CD14-positive monocyte (primary cell): ENCODE measurements at regions of chr1 and their contacts with region 1.

Region 1: DNA sequence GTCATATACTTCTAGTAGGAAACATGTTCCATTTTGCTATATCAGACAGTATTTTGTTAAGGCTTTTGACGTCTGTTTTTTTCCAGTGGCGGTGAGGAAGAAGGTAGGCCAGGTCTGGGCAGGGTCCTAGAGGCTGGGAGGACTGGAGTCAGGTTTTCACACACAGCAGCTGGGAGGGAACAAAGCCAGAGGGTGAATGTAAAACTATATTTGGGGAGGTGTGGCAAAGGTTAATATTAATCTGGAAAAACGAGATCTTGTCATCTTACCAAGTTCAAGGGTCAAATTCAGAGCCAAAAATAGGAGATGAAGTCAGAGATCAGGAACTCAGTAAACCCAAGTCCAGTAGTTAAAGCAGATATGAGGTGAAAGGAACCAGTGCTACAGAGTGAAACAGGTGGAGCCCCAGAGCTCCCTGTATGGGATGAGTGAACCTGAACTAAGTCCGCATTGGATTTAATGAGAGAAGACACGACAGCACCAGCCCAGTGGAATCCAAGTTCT is 10.7 kb upstream of the OTUD7B start:
- DNase-seq: no peak
- H3K4me3 ChIP-seq: no peak overlapping the region
- H3K4me3 Mint-ChIP-seq: peak overlapping the region in 1 of 2 donors; percentile 75
- H3K27ac ChIP-seq: no peak overlapping the region
- H3K27ac Mint-ChIP-seq: no peak overlapping the region
- H3K4me1 ChIP-seq: no peaks in the 10 kb centered on the region
- H3K4me1 Mint-ChIP-seq: peaks cover 6% of the 10 kb centered on the region
- H3K27me3 ChIP-seq: peaks cover 91 to 99% of the 10 kb centered on the region in 2 donors
- H3K27me3 Mint-ChIP-seq: peaks cover 85 to 95% (median 89%) of the 10 kb centered on the region in 3 donors
- CTCF ChIP-seq: no peak

Region 2: GRCh38 chr1:149978547-149979023 is 42.7 kb before region 1 on chr1:
- intact Hi-C with region 1: loop called in 1 of 2 experiments (anchors 10 kb)
- DNase-seq: no peak
- H3K4me3 ChIP-seq: no peak overlapping the region
- H3K4me3 Mint-ChIP-seq: peak overlapping the region in 1 of 2 donors; percentile 68
- H3K27ac ChIP-seq: no peak overlapping the region
- H3K27ac Mint-ChIP-seq: no peak overlapping the region
- H3K4me1 ChIP-seq: no peaks in the 10 kb centered on the region
- H3K4me1 Mint-ChIP-seq: no peaks in the 10 kb centered on the region
- H3K27me3 ChIP-seq: peaks cover 66 to 92% of the 10 kb centered on the region in 2 donors
- H3K27me3 Mint-ChIP-seq: peaks cover 89 to 93% (median 89%) of the 10 kb centered on the region in 3 donors
- CTCF ChIP-seq: no peak

Region 3: GRCh38 chr1:150376110-150376509 is 354.9 kb after region 1 on chr1:
- intact Hi-C with region 1: no loop called
- DNase-seq: no peak
- H3K4me3 ChIP-seq: no peak overlapping the region
- H3K4me3 Mint-ChIP-seq: no peak overlapping the region
- H3K27ac ChIP-seq: no peak overlapping the region
- H3K27ac Mint-ChIP-seq: peak overlapping the region in 1 of 7 donors; percentile 21
- H3K4me1 ChIP-seq: peaks cover 0 to 4% of the 10 kb centered on the region in 2 donors
- H3K4me1 Mint-ChIP-seq: peaks cover 31% of the 10 kb centered on the region
- H3K27me3 ChIP-seq: no peaks in the 10 kb centered on the region
- H3K27me3 Mint-ChIP-seq: no peaks in the 10 kb centered on the region
- CTCF ChIP-seq: no peak